Naive thymus-derived CD4-positive, alpha-beta T cell (primary cell): ENCODE measurements at regions of chr16 and their contacts with region 1.

Region 1: GRCh38 chr16:31458844-31459721 is at the start of gene ARMC5:
- DNase-seq: peak in 7 of 9 donors; percentile 92 to 99 (median 98)
- ATAC-seq: peak; percentile 81
- H3K4me3 ChIP-seq: peak within 1 kb of the TSS; percentile 87
- H3K4me3 Mint-ChIP-seq: peak within 1 kb of the TSS; percentile 88 to 96 (median 94)
- H3K27ac ChIP-seq: peak within 1 kb of the TSS; percentile 95
- H3K27ac Mint-ChIP-seq: peak within 1 kb of the TSS; percentile 94 to 99 (median 98)
- H3K4me1 ChIP-seq: peaks cover 32 to 37% of the 10 kb centered on the region in 2 donors
- H3K4me1 Mint-ChIP-seq: peaks cover 26 to 51% (median 46%) of the 10 kb centered on the region in 7 donors
- H3K27me3 ChIP-seq: no peaks in the 10 kb centered on the region
- H3K27me3 Mint-ChIP-seq: no peaks in the 10 kb centered on the region
- total RNA-seq, gene ARMC5: 8.5 to 14.4 (median 11.5) TPM

Region 2: DNA sequence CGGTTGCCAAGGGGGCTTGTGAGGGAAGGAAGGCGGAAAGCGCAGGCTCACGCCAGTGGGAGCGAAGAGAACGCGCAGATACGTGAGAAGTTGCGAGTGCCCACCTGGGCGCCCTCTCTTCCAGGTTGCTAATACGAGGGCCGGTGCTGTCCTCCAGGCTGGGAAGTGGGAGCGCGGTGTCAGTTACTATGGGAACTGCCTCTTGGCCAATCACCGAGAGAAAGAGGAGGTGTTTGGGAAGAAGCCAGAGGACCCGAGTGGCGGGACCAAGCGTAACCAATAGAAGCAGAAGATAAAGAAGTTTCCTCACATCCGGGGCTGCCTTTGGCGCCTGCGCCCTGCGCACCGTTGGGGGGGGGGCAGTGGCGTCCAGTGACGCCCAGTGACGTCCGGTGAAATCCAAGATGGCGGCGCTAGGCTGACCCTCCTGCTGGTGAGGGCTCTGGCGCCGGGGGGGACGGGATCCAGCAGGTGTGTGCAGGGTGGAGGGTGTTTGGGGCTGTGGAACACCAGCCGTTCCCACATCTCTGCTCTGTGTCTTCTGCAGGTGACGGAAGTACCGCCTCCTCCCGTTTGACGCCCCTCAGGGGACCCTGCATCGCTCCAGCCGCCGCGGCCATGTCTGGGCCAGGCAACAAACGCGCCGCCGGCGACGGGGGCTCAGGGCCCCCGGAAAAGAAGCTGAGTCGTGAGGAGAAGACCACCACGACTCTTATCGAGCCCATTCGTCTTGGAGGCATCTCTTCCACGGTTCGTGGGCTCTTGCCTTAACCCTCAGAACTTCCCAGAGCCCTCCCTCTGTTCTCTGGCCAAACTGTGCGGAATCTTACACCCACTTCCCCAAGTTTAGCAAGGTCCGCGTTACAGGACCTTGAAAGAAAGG is 696.9 kb before region 1 on chr16 and contains the starts of genes CFAP119 and RNF40:
- CTCF ChIA-PET with region 1: no interaction called
- POLR2A ChIA-PET with region 1: no interaction called
- intact Hi-C with region 1: loop called in 1 of 2 experiments (anchors 1 kb)
- DNase-seq: peak; percentile 73 to 97 (median 88)
- ATAC-seq: peak; percentile 96
- H3K4me3 ChIP-seq: peak within 1 kb of the TSS; percentile 99
- H3K4me3 Mint-ChIP-seq: peak within 1 kb of the TSS; percentile 96 to 98 (median 97)
- H3K27ac ChIP-seq: peak within 1 kb of the TSS; percentile 88
- H3K27ac Mint-ChIP-seq: peak within 1 kb of the TSS; percentile 82 to 96 (median 93)
- H3K4me1 ChIP-seq: peaks cover 17 to 31% of the 10 kb centered on the region in 2 donors
- H3K4me1 Mint-ChIP-seq: peaks cover 21 to 41% (median 32%) of the 10 kb centered on the region in 7 donors
- H3K27me3 ChIP-seq: no peaks in the 10 kb centered on the region
- H3K27me3 Mint-ChIP-seq: no peaks in the 10 kb centered on the region
- total RNA-seq, gene CFAP119: 2.3 to 5.9 (median 2.9) TPM
- total RNA-seq, gene RNF40: 68.7 to 122 (median 114) TPM

Region 3: DNA sequence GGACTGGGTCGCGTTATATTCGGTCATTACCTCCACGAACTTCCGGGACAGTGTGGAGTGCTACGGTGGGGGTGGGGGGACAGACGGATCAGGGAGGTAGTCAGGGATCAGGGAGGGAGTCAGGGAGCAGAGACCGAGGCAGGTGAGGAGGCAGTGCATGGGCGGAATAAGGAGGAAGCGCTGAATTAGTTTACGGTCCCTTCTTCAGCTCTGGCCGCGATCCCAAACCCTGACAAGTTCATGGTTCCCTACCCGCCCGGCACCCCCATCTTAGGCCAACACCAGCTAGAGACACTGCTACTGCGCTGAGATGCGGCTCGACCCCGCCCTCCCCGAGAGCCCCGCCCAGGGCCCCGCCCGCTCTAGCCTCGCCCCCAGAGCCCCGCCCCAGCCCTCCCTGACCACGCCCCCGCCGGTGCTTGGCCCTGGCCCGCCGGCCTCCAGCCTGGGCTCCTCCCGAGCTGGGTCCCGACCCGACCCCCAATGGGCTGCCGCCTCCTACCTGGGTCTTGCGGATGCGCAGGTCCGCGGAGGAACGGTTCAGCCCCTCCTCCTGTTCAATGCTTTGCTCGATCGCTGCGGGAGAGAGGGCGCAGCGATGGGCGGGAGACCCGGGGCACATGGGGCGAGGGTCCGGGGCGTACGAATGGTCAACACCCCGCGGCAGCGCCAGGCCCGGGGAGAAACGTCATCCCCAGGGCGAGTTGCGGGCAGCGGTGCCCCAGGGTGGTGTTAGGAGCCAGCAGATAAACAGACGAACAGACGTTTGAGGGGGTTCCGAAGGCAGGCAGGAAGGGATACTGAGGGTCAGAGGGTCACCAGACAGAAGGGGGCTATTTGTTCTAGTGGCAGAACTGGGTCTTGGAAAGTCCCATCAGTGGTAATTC is 461.8 kb before region 1 on chr16:
- CTCF ChIA-PET with region 1: no interaction called
- POLR2A ChIA-PET with region 1: no interaction called
- intact Hi-C with region 1: loop called in 1 of 2 experiments (anchors 1 kb)
- DNase-seq: peak; percentile 45 to 80 (median 66)
- ATAC-seq: peak; percentile 99
- H3K4me3 ChIP-seq: peak overlapping the region; percentile 78
- H3K4me3 Mint-ChIP-seq: peak overlapping the region; percentile 66 to 90 (median 82)
- H3K27ac ChIP-seq: peak overlapping the region; percentile 61
- H3K27ac Mint-ChIP-seq: peak overlapping the region in 7 of 9 donors; percentile 58 to 87 (median 74)
- H3K4me1 ChIP-seq: peaks cover 5 to 11% of the 10 kb centered on the region in 2 donors
- H3K4me1 Mint-ChIP-seq: peaks cover 0 to 9% (median 6%) of the 10 kb centered on the region in 7 donors
- H3K27me3 ChIP-seq: no peaks in the 10 kb centered on the region
- H3K27me3 Mint-ChIP-seq: peaks cover 0 to 3% (median 0%) of the 10 kb centered on the region in 5 donors

Region 4: GRCh38 chr16:31117391-31118197 is 341.5 kb before region 1 on chr16 and contains the start of gene KAT8:
- CTCF ChIA-PET with region 1: no interaction called
- POLR2A ChIA-PET with region 1: interaction called, 14 read pairs
- intact Hi-C with region 1: loop called in 1 of 2 experiments (anchors 1 kb)
- DNase-seq: peak; percentile 88 to 99 (median 97)
- ATAC-seq: peak; percentile 95
- H3K4me3 ChIP-seq: peak within 1 kb of the TSS; percentile 65
- H3K4me3 Mint-ChIP-seq: peak within 1 kb of the TSS; percentile 86 to 95 (median 90)
- H3K27ac ChIP-seq: peak within 1 kb of the TSS; percentile 98
- H3K27ac Mint-ChIP-seq: peak within 1 kb of the TSS; percentile 77 to 96 (median 89)
- H3K4me1 ChIP-seq: peaks cover 7 to 15% of the 10 kb centered on the region in 2 donors
- H3K4me1 Mint-ChIP-seq: peaks cover 12 to 32% (median 24%) of the 10 kb centered on the region in 7 donors
- H3K27me3 ChIP-seq: no peaks in the 10 kb centered on the region
- H3K27me3 Mint-ChIP-seq: no peaks in the 10 kb centered on the region
- total RNA-seq, gene KAT8: 63.0 to 134 (median 112) TPM

Region 5: GRCh38 chr16:31344712-31345111 is 114.4 kb before region 1 on chr16:
- CTCF ChIA-PET with region 1: no interaction called
- POLR2A ChIA-PET with region 1: no interaction called
- intact Hi-C with region 1: no loop called
- DNase-seq: peak in 1 of 9 donors; percentile 6
- ATAC-seq: peak; percentile 45
- H3K4me3 ChIP-seq: no peak overlapping the region
- H3K4me3 Mint-ChIP-seq: peak overlapping the region in 1 of 10 donors; percentile 4
- H3K27ac ChIP-seq: no peak overlapping the region
- H3K27ac Mint-ChIP-seq: no peak overlapping the region
- H3K4me1 ChIP-seq: peaks cover 0 to 8% of the 10 kb centered on the region in 2 donors
- H3K4me1 Mint-ChIP-seq: peaks cover 0 to 40% (median 0%) of the 10 kb centered on the region in 7 donors
- H3K27me3 ChIP-seq: no peaks in the 10 kb centered on the region
- H3K27me3 Mint-ChIP-seq: peaks cover 0 to 23% (median 0%) of the 10 kb centered on the region in 5 donors

Region 6: DNA sequence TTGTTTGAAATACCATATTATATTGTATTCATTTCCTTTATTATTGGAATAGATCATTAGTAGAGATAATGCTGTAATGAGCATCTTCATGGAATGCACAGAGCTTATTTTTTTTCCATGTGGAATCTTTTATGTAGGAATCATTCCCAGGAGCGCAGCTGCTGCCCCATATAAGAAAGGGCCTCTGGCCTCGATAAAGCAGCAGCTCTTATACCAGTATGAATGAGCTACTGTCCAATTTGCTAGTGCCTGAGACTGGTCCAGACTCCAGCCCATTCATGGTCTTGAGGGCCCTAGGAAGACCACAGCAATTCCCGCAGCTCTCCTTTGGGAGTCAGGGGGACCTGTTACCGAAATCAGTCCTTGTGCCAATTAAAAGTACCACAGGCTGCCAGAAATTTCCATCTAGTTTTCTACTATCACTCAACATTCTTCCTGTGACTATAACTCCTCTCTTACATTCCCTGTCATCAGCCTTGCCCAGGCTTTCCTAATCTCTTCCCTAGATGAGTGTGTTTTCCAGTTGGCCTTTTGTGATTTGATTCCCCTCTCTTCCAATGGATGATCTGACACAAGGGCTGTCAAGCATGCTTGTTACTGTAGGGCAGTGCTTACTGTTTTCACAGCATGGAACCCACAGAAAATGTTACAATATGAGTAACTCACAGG is 18.4 kb before region 1 on chr16:
- CTCF ChIA-PET with region 1: interaction called, 11 read pairs
- POLR2A ChIA-PET with region 1: interaction called, 7 read pairs
- intact Hi-C with region 1: loop called in 1 of 2 experiments (anchors 1 kb)
- DNase-seq: no peak
- ATAC-seq: no peak
- H3K4me3 ChIP-seq: no peak overlapping the region
- H3K4me3 Mint-ChIP-seq: peak overlapping the region in 1 of 10 donors; percentile 22
- H3K27ac ChIP-seq: no peak overlapping the region
- H3K27ac Mint-ChIP-seq: no peak overlapping the region
- H3K4me1 ChIP-seq: no peaks in the 10 kb centered on the region
- H3K4me1 Mint-ChIP-seq: peaks cover 0 to 23% (median 9%) of the 10 kb centered on the region in 7 donors
- H3K27me3 ChIP-seq: no peaks in the 10 kb centered on the region
- H3K27me3 Mint-ChIP-seq: peaks cover 0 to 3% (median 0%) of the 10 kb centered on the region in 5 donors

Region 7: GRCh38 chr16:31528523-31529397 is 69.7 kb after region 1 on chr16:
- CTCF ChIA-PET with region 1: no interaction called
- POLR2A ChIA-PET with region 1: no interaction called
- intact Hi-C with region 1: no loop called
- DNase-seq: no peak
- ATAC-seq: no peak
- H3K4me3 ChIP-seq: no peak overlapping the region
- H3K4me3 Mint-ChIP-seq: peak overlapping the region in 9 of 10 donors; percentile 39 to 78 (median 66)
- H3K27ac ChIP-seq: no peak overlapping the region
- H3K27ac Mint-ChIP-seq: peak overlapping the region in 1 of 9 donors; percentile 34
- H3K4me1 ChIP-seq: peaks cover 0 to 7% of the 10 kb centered on the region in 2 donors
- H3K4me1 Mint-ChIP-seq: peaks cover 0 to 21% (median 7%) of the 10 kb centered on the region in 7 donors
- H3K27me3 ChIP-seq: no peaks in the 10 kb centered on the region
- H3K27me3 Mint-ChIP-seq: peaks cover 11 to 32% (median 17%) of the 10 kb centered on the region in 5 donors

Region 8: GRCh38 chr16:31695667-31696066 is 236.6 kb after region 1 on chr16:
- CTCF ChIA-PET with region 1: no interaction called
- POLR2A ChIA-PET with region 1: interaction called, 10 read pairs
- intact Hi-C with region 1: loop called (anchors 1 kb)
- DNase-seq: peak in 7 of 9 donors; percentile 73 to 91 (median 84)
- ATAC-seq: peak; percentile 92
- H3K4me3 ChIP-seq: no peak overlapping the region
- H3K4me3 Mint-ChIP-seq: no peak overlapping the region
- H3K27ac ChIP-seq: no peak overlapping the region
- H3K27ac Mint-ChIP-seq: no peak overlapping the region
- H3K4me1 ChIP-seq: peaks cover 14 to 25% of the 10 kb centered on the region in 2 donors
- H3K4me1 Mint-ChIP-seq: peaks cover 0 to 18% (median 15%) of the 10 kb centered on the region in 7 donors
- H3K27me3 ChIP-seq: no peaks in the 10 kb centered on the region
- H3K27me3 Mint-ChIP-seq: peaks cover 0 to 26% (median 0%) of the 10 kb centered on the region in 5 donors

Region 9: GRCh38 chr16:31873556-31874365 is 414.7 kb after region 1 on chr16 and contains the start of gene ZNF267:
- CTCF ChIA-PET with region 1: interaction called, 5 read pairs
- POLR2A ChIA-PET with region 1: interaction called, 9 read pairs
- intact Hi-C with region 1: loop called (anchors 1 kb)
- DNase-seq: peak; percentile 79 to 96 (median 93)
- ATAC-seq: peak; percentile 79
- H3K4me3 ChIP-seq: peak within 1 kb of the TSS; percentile 90
- H3K4me3 Mint-ChIP-seq: peak within 1 kb of the TSS; percentile 89 to 99 (median 94)
- H3K27ac ChIP-seq: peak within 1 kb of the TSS; percentile 94
- H3K27ac Mint-ChIP-seq: peak within 1 kb of the TSS; percentile 85 to 98 (median 96)
- H3K4me1 ChIP-seq: peaks cover 66 to 72% of the 10 kb centered on the region in 2 donors
- H3K4me1 Mint-ChIP-seq: peaks cover 54 to 95% (median 84%) of the 10 kb centered on the region in 7 donors
- H3K27me3 ChIP-seq: no peaks in the 10 kb centered on the region
- H3K27me3 Mint-ChIP-seq: no peaks in the 10 kb centered on the region
- total RNA-seq, gene ZNF267: 34.8 to 74.9 (median 48.8) TPM